ENCODE measurements at regions of chr9 and their contacts with region 1.

Region 1: DNA sequence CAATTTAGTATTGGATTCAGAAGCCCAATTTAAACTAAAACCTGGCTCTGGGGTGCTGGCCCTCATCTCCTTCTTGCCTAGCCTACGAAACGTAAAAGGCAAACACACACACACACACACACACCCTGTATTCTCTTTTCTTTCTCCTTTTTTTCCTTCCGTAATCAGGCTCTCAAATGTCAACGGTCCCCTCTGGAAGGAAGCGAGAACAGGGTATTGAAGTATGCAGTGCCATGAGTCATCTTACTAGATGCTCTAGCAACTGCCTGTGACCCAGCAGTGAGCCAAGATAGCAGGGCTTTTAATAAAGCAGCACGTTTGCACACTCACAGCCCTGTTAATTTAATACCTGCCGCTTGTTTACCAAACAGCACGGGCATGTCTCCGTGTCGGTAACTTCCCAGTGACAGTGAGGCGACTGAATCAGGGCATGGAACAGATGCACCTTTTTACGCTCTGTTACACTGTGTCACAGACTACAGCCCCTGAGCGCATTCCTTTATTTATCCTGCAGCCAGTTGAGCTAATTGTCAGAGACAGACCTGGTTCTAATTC is 243.8 kb downstream of the BNC2 start:
- DNase-seq: peak; percentile 86
- H3K4me3 ChIP-seq: peak overlapping the region in 1 of 3 experiments; percentile 20
- H3K27ac ChIP-seq: peak overlapping the region; percentile 87
- H3K4me1 ChIP-seq: peaks cover 50% of the 10 kb centered on the region
- H3K27me3 ChIP-seq: no peaks in the 10 kb centered on the region
- CTCF ChIP-seq: no peak
- POLR2A ChIP-seq: no peak

Region 2: DNA sequence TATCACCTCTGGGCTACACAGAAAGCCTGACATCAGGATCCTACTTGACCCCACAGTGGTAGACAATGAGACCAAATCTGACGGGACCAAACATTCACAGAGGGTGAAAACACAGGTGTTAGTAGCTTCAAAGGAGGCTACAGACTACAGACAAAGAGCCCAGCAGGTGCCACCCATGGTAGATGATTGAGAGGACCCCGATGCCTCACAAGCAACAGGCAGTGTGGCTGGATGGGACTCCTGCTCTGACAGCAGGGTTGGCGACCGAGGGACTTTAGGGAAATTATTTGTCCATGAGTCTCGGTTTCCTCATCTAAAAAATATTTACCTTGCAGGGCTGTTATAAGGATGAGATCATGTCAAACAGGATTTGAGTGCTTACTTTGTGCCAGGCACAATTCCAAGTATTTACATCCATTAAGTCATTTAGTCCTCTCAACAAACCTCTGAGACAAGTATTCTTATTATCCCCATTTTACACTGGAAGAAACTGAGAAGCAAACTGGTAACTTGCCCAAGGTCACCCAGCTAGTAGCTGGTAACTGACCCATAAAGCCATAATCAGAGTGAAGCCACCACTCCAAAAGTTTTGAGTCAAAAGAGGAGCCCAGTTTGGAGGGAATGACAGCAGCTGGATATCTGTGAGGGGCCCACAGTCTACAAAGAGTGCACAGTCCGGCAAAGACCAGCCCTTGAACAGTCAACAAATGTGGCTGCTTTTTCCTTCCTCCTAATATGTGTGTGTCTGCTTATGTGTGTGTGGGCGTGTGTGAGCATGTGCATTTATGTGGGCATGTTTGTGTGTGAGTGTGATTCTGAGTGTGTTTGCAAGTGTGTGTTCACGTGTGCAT is 258.2 kb before region 1 on chr9:
- CTCF ChIA-PET with region 1: no interaction called
- POLR2A ChIA-PET with region 1: no interaction called
- dilution Hi-C with region 1: no loop called
- intact Hi-C with region 1: loop called (anchors 2 kb)
- DNase-seq: peak; percentile 28
- H3K4me3 ChIP-seq: no peak overlapping the region
- H3K27ac ChIP-seq: no peak overlapping the region
- H3K4me1 ChIP-seq: peaks cover 27% of the 10 kb centered on the region
- H3K27me3 ChIP-seq: no peaks in the 10 kb centered on the region
- CTCF ChIP-seq: no peak
- POLR2A ChIP-seq: no peak

Region 3: GRCh38 chr9:16530669-16531642 is 95.7 kb before region 1 on chr9:
- CTCF ChIA-PET with region 1: no interaction called
- POLR2A ChIA-PET with region 1: no interaction called
- dilution Hi-C with region 1: no loop called
- intact Hi-C with region 1: loop called (anchors 2 kb)
- DNase-seq: no peak
- H3K4me3 ChIP-seq: no peak overlapping the region
- H3K27ac ChIP-seq: no peak overlapping the region
- H3K4me1 ChIP-seq: peaks cover 34% of the 10 kb centered on the region
- H3K27me3 ChIP-seq: no peaks in the 10 kb centered on the region
- CTCF ChIP-seq: no peak
- POLR2A ChIP-seq: no peak

Region 4: DNA sequence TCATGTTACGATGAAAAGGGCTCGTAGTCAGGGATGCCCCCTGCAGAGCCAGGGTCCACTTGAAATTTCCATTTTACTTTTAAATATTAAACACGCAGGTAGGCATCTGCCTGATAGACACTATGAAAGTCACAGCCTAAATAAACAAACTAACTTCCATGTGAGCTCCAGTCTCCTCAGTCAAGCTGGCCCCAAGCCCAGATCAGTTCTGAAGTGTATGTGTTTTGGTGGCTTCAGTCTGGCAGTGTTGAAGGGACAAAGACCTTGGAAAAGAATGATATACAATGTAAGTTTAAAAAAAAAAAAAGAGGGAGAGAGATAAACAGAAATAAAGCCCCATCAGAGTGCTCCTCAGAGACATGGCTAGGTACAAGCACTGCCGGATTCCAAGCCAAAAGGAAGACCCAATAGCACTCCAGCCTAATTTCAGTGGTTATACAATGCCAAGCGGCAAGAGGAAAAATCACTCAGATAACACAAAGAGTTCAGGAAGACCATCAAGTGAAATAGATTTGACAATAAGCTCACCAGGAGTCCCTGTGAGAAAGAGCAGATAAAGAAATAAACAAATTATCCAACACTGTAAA is 62.8 kb after region 1 on chr9:
- CTCF ChIA-PET with region 1: no interaction called
- POLR2A ChIA-PET with region 1: no interaction called
- dilution Hi-C with region 1: no loop called
- intact Hi-C with region 1: loop called (anchors 5 kb)
- DNase-seq: peak; percentile 83
- H3K4me3 ChIP-seq: peak overlapping the region in 1 of 3 experiments; percentile 7
- H3K27ac ChIP-seq: peak overlapping the region; percentile 42
- H3K4me1 ChIP-seq: peaks cover 33% of the 10 kb centered on the region
- H3K27me3 ChIP-seq: no peaks in the 10 kb centered on the region
- CTCF ChIP-seq: no peak
- POLR2A ChIP-seq: no peak

Region 5: DNA sequence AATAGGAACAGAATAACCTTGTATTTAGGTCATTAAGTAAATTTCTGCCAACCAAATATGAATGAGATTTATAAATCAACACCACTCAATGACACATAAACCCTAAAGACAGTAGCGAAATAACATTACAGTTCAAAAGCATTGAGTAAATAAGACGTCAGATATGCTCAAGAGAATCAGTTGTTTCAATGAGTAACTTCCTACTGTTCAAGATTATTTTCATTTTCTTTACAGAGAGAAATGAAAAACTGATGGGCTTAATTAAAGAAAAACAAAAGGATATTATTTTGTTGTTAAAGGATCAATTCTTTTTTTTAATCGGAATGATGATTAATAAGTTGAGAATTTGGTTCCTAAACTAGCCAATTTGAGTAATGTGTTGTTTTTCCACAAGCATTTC is 93.7 kb after region 1 on chr9:
- CTCF ChIA-PET with region 1: no interaction called
- POLR2A ChIA-PET with region 1: no interaction called
- dilution Hi-C with region 1: no loop called
- intact Hi-C with region 1: loop called (anchors 1 kb)
- DNase-seq: peak; percentile 78
- H3K4me3 ChIP-seq: peak overlapping the region in 1 of 3 experiments; percentile 16
- H3K27ac ChIP-seq: peak overlapping the region; percentile 90
- H3K4me1 ChIP-seq: peaks cover 34% of the 10 kb centered on the region
- H3K27me3 ChIP-seq: no peaks in the 10 kb centered on the region
- CTCF ChIP-seq: no peak
- POLR2A ChIP-seq: peak; percentile 22

Measured in endothelial cell of umbilical vein (primary cell).